ENCODE measurements at regions of chr15 and their contacts with region 1.

Region 1: DNA sequence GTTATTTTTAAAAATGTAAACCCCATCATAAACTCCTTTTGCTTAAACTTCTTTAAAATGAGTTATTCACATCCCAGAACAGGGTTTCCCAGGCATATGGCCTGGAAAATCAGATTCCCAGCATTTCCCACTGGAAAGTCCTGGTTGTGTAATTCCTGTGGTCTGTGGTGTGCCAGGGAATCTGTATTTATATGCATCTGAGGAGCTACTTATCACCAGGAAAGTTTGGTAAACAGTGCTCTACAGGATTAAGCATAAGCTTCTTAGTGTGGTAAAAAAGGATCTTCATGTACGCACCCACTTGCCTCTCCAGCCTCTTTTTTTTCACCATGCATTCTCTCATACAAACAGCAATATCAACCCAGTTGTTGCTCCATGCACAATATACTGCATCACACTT is 28.2 kb downstream of the MEIS2 start:
- DNase-seq: no peak
- ATAC-seq: no peak
- H3K4me3 ChIP-seq: no peak overlapping the region
- H3K4me3 Mint-ChIP-seq: no peak overlapping the region
- H3K27ac ChIP-seq: no peak overlapping the region
- H3K27ac Mint-ChIP-seq: no peak overlapping the region
- H3K4me1 ChIP-seq: no peaks in the 10 kb centered on the region
- H3K4me1 Mint-ChIP-seq: no peaks in the 10 kb centered on the region
- H3K27me3 ChIP-seq: no peaks in the 10 kb centered on the region
- H3K27me3 Mint-ChIP-seq: peaks cover 0 to 53% (median 27%) of the 10 kb centered on the region in 5 donors

Region 2: GRCh38 chr15:36415643-36416042 is 656.5 kb before region 1 on chr15:
- CTCF ChIA-PET with region 1: no interaction called
- POLR2A ChIA-PET with region 1: no interaction called
- intact Hi-C with region 1: loop called in 1 of 2 experiments (anchors 5 kb)
- DNase-seq: no peak
- ATAC-seq: no peak
- H3K4me3 ChIP-seq: no peak overlapping the region
- H3K4me3 Mint-ChIP-seq: no peak overlapping the region
- H3K27ac ChIP-seq: no peak overlapping the region
- H3K27ac Mint-ChIP-seq: no peak overlapping the region
- H3K4me1 ChIP-seq: no peaks in the 10 kb centered on the region
- H3K4me1 Mint-ChIP-seq: no peaks in the 10 kb centered on the region
- H3K27me3 ChIP-seq: no peaks in the 10 kb centered on the region
- H3K27me3 Mint-ChIP-seq: peaks cover 0 to 5% (median 0%) of the 10 kb centered on the region in 5 donors

Region 3: GRCh38 chr15:36778531-36778930 is 293.6 kb before region 1 on chr15:
- CTCF ChIA-PET with region 1: no interaction called
- POLR2A ChIA-PET with region 1: no interaction called
- intact Hi-C with region 1: no loop called
- DNase-seq: no peak
- ATAC-seq: no peak
- H3K4me3 ChIP-seq: no peak overlapping the region
- H3K4me3 Mint-ChIP-seq: no peak overlapping the region
- H3K27ac ChIP-seq: no peak overlapping the region
- H3K27ac Mint-ChIP-seq: no peak overlapping the region
- H3K4me1 ChIP-seq: no peaks in the 10 kb centered on the region
- H3K4me1 Mint-ChIP-seq: peaks cover 0 to 8% (median 7%) of the 10 kb centered on the region in 7 donors
- H3K27me3 ChIP-seq: no peaks in the 10 kb centered on the region
- H3K27me3 Mint-ChIP-seq: no peaks in the 10 kb centered on the region

Region 4: DNA sequence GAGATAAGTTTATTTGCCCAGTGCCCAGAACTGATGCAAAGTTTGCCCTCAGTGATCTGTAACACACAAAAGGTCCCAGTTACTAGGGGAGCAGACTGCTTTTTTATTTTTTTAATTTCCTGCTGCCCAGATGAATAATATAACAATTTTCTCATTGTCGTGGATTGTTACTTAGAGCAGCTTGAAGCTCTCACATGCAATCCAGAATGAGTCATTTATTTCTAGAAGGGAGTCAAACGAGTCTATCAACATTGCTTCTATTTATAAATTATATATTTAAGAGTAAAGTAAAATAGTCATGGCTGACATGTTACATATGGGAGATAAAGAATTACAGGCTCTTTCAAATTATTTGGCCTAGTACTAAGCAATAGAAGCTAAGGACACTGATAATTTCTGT is 13.1 kb before region 1 on chr15:
- CTCF ChIA-PET with region 1: no interaction called
- POLR2A ChIA-PET with region 1: no interaction called
- intact Hi-C with region 1: no loop called
- DNase-seq: no peak
- ATAC-seq: no peak
- H3K4me3 ChIP-seq: no peak overlapping the region
- H3K4me3 Mint-ChIP-seq: no peak overlapping the region
- H3K27ac ChIP-seq: no peak overlapping the region
- H3K27ac Mint-ChIP-seq: no peak overlapping the region
- H3K4me1 ChIP-seq: no peaks in the 10 kb centered on the region
- H3K4me1 Mint-ChIP-seq: no peaks in the 10 kb centered on the region
- H3K27me3 ChIP-seq: no peaks in the 10 kb centered on the region
- H3K27me3 Mint-ChIP-seq: peaks cover 0 to 45% (median 7%) of the 10 kb centered on the region in 5 donors